Aorta (tissue), 5 donors: ENCODE measurements at regions of chr5 and their contacts with region 1.

Region 1: DNA sequence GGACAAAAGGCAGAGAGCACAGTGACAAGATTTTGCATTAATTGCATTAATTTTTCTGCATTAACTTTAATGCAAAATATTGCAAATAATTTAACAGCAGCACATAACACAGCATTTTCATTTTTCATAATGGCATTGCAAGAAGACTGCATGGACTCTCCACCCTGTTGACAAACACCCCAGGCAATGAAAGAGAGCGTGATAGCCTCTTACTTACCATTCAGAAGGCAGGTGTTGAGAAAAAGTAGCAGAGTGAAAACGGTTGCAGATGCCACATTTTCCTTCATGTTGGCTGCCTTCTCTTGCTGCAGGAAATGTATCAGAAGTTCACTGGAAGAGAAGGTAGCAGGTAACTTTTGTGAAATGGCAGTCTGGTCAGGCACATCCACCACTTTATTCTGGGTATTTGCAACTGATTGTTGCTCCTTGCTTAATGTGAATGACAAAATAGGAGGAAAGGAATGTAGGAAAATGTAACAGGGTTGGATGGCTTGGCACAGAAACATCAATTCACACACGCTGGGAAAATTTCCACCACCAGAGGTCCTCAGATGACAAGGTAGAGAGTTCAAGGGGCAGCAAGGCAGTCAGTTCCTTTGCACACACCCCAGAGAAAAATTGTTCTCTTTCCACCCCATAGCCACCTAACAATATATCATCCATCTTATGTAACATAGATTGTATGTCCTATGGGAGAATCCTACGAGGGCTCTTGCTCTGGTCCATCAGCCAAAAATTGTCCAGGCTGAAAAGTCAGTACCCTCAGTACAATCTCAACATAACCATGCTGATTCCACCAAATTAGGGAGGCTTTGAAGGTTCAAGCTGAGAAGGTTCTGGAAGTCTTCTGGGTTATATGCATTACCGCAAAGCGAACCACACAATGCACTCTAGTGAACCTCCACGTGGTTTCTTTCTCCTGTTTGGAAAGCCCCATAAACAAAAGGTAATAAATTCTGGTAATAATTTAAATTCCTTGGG is 41.9 kb upstream of the AGXT2 start:
- DNase-seq: no peak
- ATAC-seq: peak; percentile 58
- H3K4me3 ChIP-seq: no peak overlapping the region
- H3K27ac ChIP-seq: no peak overlapping the region
- H3K4me1 ChIP-seq: no peaks in the 10 kb centered on the region
- H3K27me3 ChIP-seq: no peaks in the 10 kb centered on the region

Region 2: DNA sequence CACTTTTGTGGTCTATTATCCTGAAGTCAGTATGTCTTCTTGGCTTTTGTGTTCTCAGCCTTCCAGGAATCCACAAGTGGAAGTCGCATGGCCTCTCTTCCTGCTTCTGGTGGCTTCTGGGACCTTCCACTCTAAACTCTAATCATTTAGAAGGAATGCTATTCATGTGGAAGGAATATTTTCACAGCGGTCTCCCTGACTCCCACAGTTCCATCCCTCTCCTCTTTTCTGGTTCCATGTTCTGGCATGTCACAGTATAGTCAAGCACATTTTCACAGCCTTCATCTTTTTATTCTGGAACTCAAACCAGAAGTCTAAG is 440.8 kb before region 1 on chr5:
- intact Hi-C with region 1: no loop called
- DNase-seq: no peak
- ATAC-seq: no peak
- H3K4me3 ChIP-seq: no peak overlapping the region
- H3K27ac ChIP-seq: no peak overlapping the region
- H3K4me1 ChIP-seq: no peaks in the 10 kb centered on the region
- H3K27me3 ChIP-seq: no peaks in the 10 kb centered on the region

Region 3: DNA sequence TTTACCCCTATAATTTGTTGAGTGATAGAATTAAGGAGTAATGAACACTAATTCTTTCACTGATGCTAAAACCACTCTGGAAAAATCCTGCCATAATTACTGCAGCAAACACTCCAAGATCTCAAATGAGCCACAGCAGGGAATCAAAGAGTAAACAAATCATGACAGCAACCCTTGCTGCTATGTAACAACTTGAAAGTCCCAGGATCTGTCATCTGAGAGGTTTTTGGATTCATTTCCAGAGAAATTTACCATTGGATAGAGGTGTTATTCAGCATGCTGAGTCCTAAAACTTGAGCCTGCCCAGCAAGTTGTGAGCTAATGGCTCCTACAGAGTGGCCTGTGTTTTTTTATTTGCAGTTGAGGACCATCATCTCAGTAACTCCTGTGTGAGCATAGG is 81.5 kb after region 1 on chr5:
- intact Hi-C with region 1: no loop called
- DNase-seq: no peak
- ATAC-seq: no peak
- H3K4me3 ChIP-seq: no peak overlapping the region
- H3K27ac ChIP-seq: no peak overlapping the region
- H3K4me1 ChIP-seq: peaks cover 0 to 3% of the 10 kb centered on the region in 2 donors
- H3K27me3 ChIP-seq: no peaks in the 10 kb centered on the region

Region 4: DNA sequence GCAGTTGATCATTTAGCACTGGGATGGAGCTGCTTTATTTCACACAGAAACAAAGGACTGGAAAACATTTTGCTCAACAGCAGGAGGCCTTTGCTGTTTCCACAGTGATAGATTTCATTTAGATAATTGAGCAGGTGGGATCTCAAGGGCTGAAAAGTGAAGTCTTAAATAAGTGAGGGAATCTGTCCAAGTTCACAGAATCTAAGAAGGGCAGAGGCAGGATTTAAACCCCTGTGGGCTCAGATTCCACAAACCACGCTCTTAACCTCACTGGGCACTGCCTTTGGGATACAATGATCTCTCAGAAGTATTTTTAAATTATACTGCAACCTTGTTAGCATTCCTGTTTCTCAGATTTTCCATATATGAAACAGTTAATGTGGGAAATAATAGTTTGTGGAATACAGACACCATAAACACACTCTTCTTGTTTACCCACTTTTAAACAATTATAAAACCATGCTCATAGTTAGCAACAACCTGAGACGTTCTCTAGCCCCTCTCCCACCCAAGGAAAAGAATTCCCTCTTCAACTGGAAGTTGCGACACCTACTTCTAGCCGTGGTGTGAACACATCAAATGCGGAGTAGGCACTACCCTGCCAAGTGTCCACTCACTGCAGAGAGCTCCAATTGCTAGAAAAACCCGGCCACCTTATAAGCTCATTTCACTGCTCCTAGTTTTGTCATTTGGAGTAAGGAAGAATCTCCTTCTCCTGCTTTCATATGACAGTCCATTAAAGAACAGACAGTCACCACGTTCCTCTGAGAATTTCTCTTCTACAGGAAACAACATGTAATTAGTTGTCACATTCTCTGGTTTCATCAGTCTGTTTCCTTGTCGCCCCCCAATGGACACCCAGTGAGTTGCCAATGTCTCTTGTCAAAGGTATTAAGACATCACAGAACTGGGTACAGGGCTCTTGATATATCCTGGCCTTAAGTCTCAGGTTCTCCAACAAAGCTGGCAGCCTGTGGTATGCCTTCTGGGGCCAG is 93.2 kb after region 1 on chr5:
- intact Hi-C with region 1: loop called in 1 of 2 experiments (anchors 5 kb)
- DNase-seq: peak in 1 of 2 donors; percentile 42
- ATAC-seq: peak; percentile 61
- H3K4me3 ChIP-seq: no peak overlapping the region
- H3K27ac ChIP-seq: no peak overlapping the region
- H3K4me1 ChIP-seq: no peaks in the 10 kb centered on the region
- H3K27me3 ChIP-seq: no peaks in the 10 kb centered on the region

Region 5: GRCh38 chr5:35926389-35927051 is 836.9 kb after region 1 on chr5:
- intact Hi-C with region 1: loop called (anchors 5 kb)
- DNase-seq: no peak
- ATAC-seq: peak; percentile 78
- H3K4me3 ChIP-seq: no peak overlapping the region
- H3K27ac ChIP-seq: no peak overlapping the region
- H3K4me1 ChIP-seq: no peaks in the 10 kb centered on the region
- H3K27me3 ChIP-seq: no peaks in the 10 kb centered on the region